ENCODE measurements at regions of chr11 and their contacts with region 1.

Region 1: DNA sequence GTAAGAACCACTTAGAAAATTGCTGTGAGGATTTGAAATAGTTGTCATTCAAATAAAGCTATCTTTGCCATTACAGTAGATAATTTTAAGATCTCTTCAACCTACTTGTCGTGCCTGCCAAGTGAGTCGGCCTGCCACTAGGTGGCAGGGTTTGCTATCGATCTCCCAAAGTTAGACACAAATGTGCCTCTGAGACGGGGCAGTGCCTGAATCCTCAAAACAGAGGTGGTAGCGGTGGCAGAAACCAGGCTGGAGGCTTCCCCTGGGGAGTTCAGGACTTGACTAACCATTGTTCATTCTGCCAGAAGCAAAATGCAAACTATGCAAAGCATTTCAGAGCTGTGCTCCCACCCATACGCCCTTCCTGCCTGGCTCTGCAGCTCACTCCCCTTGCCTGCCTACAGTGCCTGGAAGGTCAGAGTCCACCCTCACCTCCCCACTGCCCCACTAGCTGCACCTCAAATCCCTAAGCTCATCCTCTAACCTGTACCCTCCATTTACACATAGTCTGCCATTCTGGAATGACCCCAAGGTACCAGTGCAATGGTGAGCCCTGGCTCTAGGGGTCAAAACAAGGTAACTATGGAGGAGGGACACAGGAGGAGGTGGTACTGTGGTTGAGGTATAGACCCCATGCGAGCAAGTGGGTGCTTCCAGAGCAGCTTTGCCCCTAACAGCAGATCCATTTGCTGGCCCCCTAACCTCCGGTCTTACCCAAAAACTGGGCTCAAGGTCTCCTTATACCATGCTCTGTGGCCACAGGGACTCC is 82.1 kb downstream of the C11orf58 start:
- DNase-seq: peak; percentile 20
- H3K4me3 ChIP-seq: no peak overlapping the region
- H3K27me3 ChIP-seq: no peaks in the 10 kb centered on the region; the same call in 1 of the 2 replicates
- CTCF ChIP-seq: peak; percentile 91

Region 2: GRCh38 chr11:16148301-16148931 is 672.1 kb before region 1 on chr11:
- CTCF ChIA-PET with region 1: no interaction called
- POLR2A ChIA-PET with region 1: no interaction called
- DNase-seq: no peak
- H3K4me3 ChIP-seq: no peak overlapping the region
- H3K27me3 ChIP-seq: no peaks in the 10 kb centered on the region
- CTCF ChIP-seq: no peak

Region 3: GRCh38 chr11:16809886-16810668 is 10.4 kb before region 1 on chr11:
- CTCF ChIA-PET with region 1: interaction called, 20 read pairs
- POLR2A ChIA-PET with region 1: no interaction called
- DNase-seq: no peak
- H3K4me3 ChIP-seq: no peak overlapping the region
- H3K27me3 ChIP-seq: peaks cover 10% of the 10 kb centered on the region
- CTCF ChIP-seq: no peak

Region 4: GRCh38 chr11:16831316-16832192 is 11.0 kb after region 1 on chr11:
- CTCF ChIA-PET with region 1: interaction called, 23 read pairs
- POLR2A ChIA-PET with region 1: no interaction called
- DNase-seq: peak; percentile 4
- H3K4me3 ChIP-seq: no peak overlapping the region
- H3K27me3 ChIP-seq: peaks cover 1% of the 10 kb centered on the region
- CTCF ChIP-seq: no peak

Region 5: GRCh38 chr11:16881074-16881709 is 60.7 kb after region 1 on chr11:
- CTCF ChIA-PET with region 1: interaction called, 13 read pairs
- POLR2A ChIA-PET with region 1: no interaction called
- DNase-seq: no peak
- H3K4me3 ChIP-seq: no peak overlapping the region
- H3K27me3 ChIP-seq: no peaks in the 10 kb centered on the region; the same call in 1 of the 2 replicates
- CTCF ChIP-seq: peak; percentile 30

Region 6: DNA sequence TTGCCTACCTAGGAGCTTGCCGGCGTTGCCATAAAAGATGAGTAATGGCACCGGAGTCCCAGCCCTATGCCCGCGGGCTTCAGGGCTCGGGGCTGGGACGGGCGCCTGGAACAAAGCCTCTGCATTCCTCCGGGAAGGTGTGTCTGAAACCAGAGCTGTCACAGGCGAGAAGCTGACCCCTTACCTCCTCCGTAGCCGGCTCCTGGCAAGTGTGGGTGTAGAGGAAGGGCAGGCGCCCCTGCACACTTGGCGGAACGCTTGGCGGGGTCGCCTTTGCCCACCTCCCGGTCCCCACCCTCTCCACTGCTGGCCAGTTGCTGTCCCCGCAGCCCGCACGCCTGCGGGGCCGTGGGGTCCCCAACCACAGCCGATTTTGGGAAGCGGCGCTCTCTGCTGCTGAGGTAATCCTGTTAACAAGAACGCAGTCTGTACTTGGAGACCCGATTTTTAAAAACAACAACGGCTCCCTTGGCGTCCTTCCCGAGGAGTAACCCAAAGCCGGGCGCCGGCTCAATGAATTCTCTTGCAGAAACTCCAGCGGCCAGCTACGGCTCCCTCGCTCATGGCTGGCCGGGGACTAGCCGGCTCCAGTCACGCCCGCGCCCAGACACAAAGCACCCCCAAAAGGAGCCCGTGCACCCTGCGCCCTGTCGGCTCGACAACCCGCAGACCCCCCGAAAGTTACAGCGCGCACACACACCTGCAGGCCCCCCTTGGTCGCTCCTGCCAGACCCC is 104.5 kb after region 1 on chr11:
- CTCF ChIA-PET with region 1: no interaction called
- POLR2A ChIA-PET with region 1: no interaction called
- DNase-seq: no peak
- H3K4me3 ChIP-seq: peak overlapping the region; percentile 20
- H3K27me3 ChIP-seq: peaks cover 31% of the 10 kb centered on the region
- CTCF ChIP-seq: no peak

Region 7: GRCh38 chr11:17063171-17064002 is 242.9 kb after region 1 on chr11:
- CTCF ChIA-PET with region 1: interaction called, 36 read pairs
- POLR2A ChIA-PET with region 1: no interaction called
- DNase-seq: no peak
- H3K4me3 ChIP-seq: no peak overlapping the region
- H3K27me3 ChIP-seq: no peaks in the 10 kb centered on the region
- CTCF ChIP-seq: peak; percentile 87